Heart left ventricle (tissue), 16 donors: ENCODE measurements at regions of chr3 and their contacts with region 1.

Region 1: GRCh38 chr3:132464066-132464465 is 46.8 kb downstream of the DNAJC13 start:
- DNase-seq: no peak
- ATAC-seq: no peak
- H3K4me3 ChIP-seq: no peak overlapping the region
- H3K27ac ChIP-seq: no peak overlapping the region
- H3K4me1 ChIP-seq: peaks cover 0 to 5% (median 0%) of the 10 kb centered on the region in 12 donors
- H3K27me3 ChIP-seq: no peaks in the 10 kb centered on the region
- CTCF ChIP-seq: no peak
- POLR2A ChIP-seq: no peak

Region 2: DNA sequence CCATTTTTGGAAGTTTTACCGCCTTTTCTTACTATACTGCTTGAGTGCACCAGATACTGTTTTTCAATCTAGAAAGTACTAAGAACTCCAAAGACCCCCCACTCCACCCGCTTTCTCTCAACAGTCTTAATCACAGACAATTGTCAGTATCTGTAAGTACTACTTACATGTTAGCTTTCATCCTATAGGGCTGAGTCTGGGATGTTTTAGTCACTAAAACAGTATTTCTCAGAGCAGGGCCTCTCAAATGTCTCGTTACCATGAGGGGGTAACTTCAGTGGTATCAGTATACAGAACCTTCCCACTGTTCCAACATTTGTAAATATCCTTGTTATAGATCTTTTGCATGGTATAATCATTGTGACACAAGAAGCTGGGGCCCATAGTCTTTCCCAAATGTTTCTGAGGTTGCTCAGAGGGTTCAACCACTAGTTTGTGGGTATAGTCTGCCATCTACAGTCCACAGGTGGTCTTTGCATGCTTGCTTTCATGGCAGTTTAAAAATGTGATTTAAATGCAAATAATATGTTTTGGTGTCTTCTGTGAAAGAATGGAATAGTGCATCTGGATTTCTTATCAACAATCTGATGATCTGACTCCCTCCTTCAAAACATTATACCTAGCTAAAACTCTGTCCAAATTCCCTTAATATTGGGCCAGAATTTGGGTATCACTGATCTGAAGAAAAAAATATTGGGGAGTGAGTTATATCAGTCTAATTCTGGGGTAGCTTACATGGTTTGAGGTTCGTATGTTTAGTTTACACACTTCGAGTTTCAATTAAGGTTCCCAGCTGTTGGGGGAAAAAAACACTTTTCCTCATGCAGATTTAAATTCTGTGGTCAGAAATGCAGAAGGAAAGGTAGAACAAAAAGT is 64.8 kb before region 1 on chr3:
- intact Hi-C with region 1: loop called in 1 of 10 experiments (anchors 2 kb)
- DNase-seq: no peak
- ATAC-seq: peak in 3 of 4 donors; percentile 42 to 74 (median 62)
- H3K4me3 ChIP-seq: no peak overlapping the region
- H3K27ac ChIP-seq: no peak overlapping the region
- H3K4me1 ChIP-seq: peaks cover 0 to 5% (median 0%) of the 10 kb centered on the region in 12 donors
- H3K27me3 ChIP-seq: no peaks in the 10 kb centered on the region
- CTCF ChIP-seq: peak; percentile 59 to 82 (median 72)
- POLR2A ChIP-seq: no peak

Region 3: DNA sequence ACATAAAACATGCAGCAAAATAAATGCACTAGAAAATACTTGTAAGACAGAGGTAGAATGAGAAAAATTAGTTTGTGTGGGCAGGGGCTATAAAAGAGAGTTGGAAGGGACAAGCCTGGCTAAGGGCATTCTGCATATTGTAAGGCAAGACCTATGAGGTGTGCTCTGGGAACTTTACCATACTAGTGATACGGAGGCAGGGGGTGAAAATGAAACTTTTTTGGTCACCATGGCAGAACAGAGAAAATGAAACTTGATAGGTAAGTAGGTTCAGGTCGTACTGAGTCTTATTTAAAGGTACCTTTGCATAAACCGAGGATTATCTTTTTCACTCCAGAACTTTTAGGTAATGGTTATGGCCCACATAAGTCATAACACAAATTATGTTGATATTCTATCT is 58.3 kb after region 1 on chr3:
- intact Hi-C with region 1: loop called in 1 of 10 experiments (anchors 10 kb)
- DNase-seq: no peak
- ATAC-seq: no peak
- H3K4me3 ChIP-seq: no peak overlapping the region
- H3K27ac ChIP-seq: no peak overlapping the region
- H3K4me1 ChIP-seq: no peaks in the 10 kb centered on the region
- H3K27me3 ChIP-seq: no peaks in the 10 kb centered on the region
- CTCF ChIP-seq: no peak
- POLR2A ChIP-seq: no peak

Region 4: DNA sequence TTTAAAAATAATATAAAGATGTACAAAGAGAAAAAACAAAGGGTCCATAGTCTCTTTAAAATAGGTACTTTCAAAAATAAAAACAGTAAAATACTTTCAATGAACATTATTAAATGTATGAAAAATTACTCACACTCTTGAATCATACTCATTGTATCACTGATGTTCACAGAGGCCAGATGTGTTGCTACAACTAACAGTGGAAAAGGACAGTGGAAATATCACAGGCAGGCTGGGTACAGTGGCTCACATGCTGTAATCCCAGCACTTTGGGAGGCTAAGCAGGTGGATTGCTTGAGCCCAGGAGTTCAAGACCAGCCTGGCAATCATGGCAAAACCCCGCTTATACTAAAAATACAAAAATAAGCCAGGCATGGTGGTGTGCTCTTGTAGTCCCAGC is 231.4 kb after region 1 on chr3:
- intact Hi-C with region 1: no loop called
- DNase-seq: no peak
- ATAC-seq: no peak
- H3K4me3 ChIP-seq: no peak overlapping the region
- H3K27ac ChIP-seq: no peak overlapping the region
- H3K4me1 ChIP-seq: peaks cover 0 to 1% (median 0%) of the 10 kb centered on the region in 12 donors
- H3K27me3 ChIP-seq: no peaks in the 10 kb centered on the region
- CTCF ChIP-seq: no peak
- POLR2A ChIP-seq: no peak

Region 5: DNA sequence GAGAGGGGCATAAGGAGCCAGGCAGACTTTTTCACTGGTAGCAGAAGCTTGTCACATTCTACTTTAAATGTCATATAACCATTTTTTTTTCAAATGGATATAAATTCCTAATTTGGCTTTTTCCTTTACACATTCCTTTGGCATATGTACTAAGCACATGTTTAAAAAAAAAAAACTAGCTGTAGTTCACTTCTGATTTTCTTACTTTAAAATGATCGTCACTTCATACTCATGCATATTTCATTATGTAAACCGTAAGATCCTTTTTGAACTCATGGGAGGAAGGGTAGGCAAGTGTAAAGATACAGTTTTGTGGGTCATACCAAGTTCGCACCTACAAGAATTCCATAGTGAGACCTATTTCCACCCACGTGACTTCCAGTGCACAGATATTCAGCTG is 890.7 kb after region 1 on chr3:
- intact Hi-C with region 1: no loop called
- DNase-seq: no peak
- ATAC-seq: no peak
- H3K4me3 ChIP-seq: no peak overlapping the region
- H3K27ac ChIP-seq: no peak overlapping the region
- H3K4me1 ChIP-seq: no peaks in the 10 kb centered on the region
- H3K27me3 ChIP-seq: no peaks in the 10 kb centered on the region
- CTCF ChIP-seq: no peak
- POLR2A ChIP-seq: no peak